GM10248 (cell line): ENCODE measurements at regions of chr5 and their contacts with region 1.

Region 1: GRCh38 chr5:171984748-171985419 is 21.6 kb downstream of the FBXW11 start:
- DNase-seq: no peak
- CTCF ChIP-seq: no peak

Region 2: DNA sequence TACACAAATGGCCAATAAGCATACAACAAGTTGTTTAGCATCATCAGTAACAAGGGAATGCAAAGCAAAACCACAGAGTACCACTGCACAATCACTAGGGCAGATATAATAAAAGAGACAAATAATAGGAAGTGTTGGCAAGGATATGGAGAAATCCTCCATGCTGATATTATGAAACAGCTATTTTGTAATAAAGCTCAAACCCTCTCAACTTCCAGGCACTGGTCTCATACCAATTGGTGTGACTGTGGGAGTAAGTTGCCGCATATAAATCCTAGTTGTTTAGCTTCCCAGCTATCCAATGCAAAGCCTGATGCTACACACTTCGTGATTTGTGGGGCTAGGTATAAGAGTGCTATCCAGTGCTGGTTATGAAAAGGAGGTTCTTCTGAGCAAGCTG is 110.7 kb before region 1 on chr5:
- CTCF ChIA-PET with region 1: no interaction called
- POLR2A ChIA-PET with region 1: no interaction called
- DNase-seq: no peak
- CTCF ChIP-seq: no peak

Region 3: GRCh38 chr5:171999877-172000276 is 15.0 kb after region 1 on chr5:
- CTCF ChIA-PET with region 1: interaction called, 36 read pairs
- POLR2A ChIA-PET with region 1: no interaction called
- DNase-seq: peak; percentile 31
- CTCF ChIP-seq: no peak

Region 4: DNA sequence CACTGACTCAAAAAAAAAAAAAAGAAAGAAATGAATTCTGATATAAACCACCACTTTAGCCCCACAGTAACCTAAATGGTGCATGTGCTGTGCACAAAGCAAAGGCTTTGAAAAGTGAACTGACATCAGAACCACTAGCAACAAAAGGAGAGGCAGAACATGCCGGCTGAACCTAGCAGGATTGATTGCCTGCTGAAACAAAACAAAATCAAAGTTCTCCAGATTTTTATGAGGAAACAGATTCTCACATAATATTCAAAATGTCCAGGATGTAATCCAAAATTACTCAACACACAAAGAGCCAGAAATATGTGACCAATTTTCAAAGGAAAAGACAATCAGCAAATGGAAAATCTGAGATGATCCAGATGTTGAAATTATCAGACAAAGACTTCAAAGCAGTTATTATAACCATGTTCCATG is 260.8 kb after region 1 on chr5:
- CTCF ChIA-PET with region 1: no interaction called
- POLR2A ChIA-PET with region 1: no interaction called
- DNase-seq: no peak
- CTCF ChIP-seq: no peak